ENCODE measurements at regions of chrX and their contacts with region 1.

Region 1: DNA sequence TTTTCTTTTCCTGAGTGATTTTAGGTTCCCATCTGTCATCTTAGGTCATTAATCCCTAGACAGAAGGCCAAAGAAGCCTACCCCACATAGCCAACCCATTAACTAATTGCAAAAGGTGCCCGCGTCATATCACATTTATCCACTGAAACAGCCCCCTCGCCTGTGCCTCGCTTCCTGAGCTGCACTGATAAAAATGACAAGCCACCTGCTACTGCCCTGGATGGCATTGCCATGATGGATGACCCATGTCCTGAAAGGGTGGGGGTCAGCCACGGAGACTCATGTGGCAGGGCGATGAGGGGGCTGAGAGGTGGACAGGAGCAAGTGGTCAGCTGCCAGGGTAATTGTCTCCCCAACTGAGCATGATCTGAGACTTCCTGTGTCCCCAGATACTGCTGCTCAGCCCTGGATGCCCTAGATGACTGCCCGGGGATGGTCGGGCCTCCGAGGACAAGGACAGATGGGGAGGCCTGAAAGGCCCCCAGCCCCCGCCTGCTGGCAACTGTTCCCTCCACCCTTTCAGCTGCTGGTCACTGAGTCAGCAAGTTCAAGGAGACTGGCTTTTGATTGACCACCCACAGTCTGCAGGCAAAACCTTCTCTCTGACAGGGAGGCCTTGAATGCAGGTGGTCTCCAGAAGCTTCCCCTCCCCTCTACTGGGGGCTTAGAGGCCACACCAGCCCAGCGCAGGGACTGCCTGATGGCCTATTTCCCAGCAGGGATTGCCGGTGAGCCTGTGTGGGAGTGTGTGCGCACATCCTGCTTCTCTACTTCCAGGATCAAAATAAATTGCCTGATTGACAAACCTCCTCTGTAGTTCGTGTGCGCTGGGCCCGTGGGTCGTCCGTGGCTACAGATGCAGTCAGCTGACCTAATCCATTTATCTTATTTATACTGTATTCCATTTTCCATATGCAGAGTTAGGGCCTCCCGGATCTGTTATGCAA is 496.3 kb downstream of the BCOR start:
- DNase-seq: no peak
- ATAC-seq: no peak
- H3K4me3 ChIP-seq: no peak overlapping the region
- H3K4me3 Mint-ChIP-seq: no peak overlapping the region
- H3K27ac ChIP-seq: no peak overlapping the region
- H3K27ac Mint-ChIP-seq: no peak overlapping the region
- H3K4me1 ChIP-seq: no peaks in the 10 kb centered on the region
- H3K4me1 Mint-ChIP-seq: no peaks in the 10 kb centered on the region
- H3K27me3 ChIP-seq: peaks cover 0 to 2% (median 0%) of the 10 kb centered on the region in 4 experiments
- H3K27me3 Mint-ChIP-seq: peaks cover 8% of the 10 kb centered on the region
- CTCF ChIP-seq: no peak

Region 2: GRCh38 chrX:39703307-39703706 is 101.8 kb after region 1 on chrX:
- CTCF ChIA-PET with region 1: no interaction called
- POLR2A ChIA-PET with region 1: no interaction called
- intact Hi-C with region 1: loop called (anchors 5 kb)
- DNase-seq: no peak
- ATAC-seq: no peak
- H3K4me3 ChIP-seq: no peak overlapping the region
- H3K4me3 Mint-ChIP-seq: no peak overlapping the region
- H3K27ac ChIP-seq: no peak overlapping the region
- H3K27ac Mint-ChIP-seq: no peak overlapping the region
- H3K4me1 ChIP-seq: no peaks in the 10 kb centered on the region
- H3K4me1 Mint-ChIP-seq: no peaks in the 10 kb centered on the region
- H3K27me3 ChIP-seq: no peaks in the 10 kb centered on the region
- H3K27me3 Mint-ChIP-seq: peaks cover 6% of the 10 kb centered on the region
- CTCF ChIP-seq: no peak